Caco-2 (cell line): ENCODE measurements at regions of chr2 and their contacts with region 1.

Region 1: GRCh38 chr2:75002007-75002406 is 43.6 kb downstream of the POLE4 start:
- DNase-seq: peak; percentile 70 to 74
- H3K4me3 ChIP-seq: no peak overlapping the region
- H3K4me3 Mint-ChIP-seq: no peak overlapping the region
- H3K27ac Mint-ChIP-seq: no peak overlapping the region
- H3K4me1 ChIP-seq: peaks cover 22% of the 10 kb centered on the region
- H3K4me1 Mint-ChIP-seq: no peaks in the 10 kb centered on the region
- H3K27me3 ChIP-seq: no peaks in the 10 kb centered on the region
- H3K27me3 Mint-ChIP-seq: no peaks in the 10 kb centered on the region
- CTCF ChIP-seq: no peak

Region 2: GRCh38 chr2:74816540-74817303 is 185.3 kb before region 1 on chr2:
- CTCF ChIA-PET with region 1: no interaction called
- POLR2A ChIA-PET with region 1: no interaction called
- intact Hi-C with region 1: no loop called
- DNase-seq: peak; percentile 57
- H3K4me3 ChIP-seq: no peak overlapping the region; the same call in 1 of the 2 replicates
- H3K4me3 Mint-ChIP-seq: peak overlapping the region; percentile 52
- H3K27ac Mint-ChIP-seq: peak overlapping the region; percentile 37
- H3K4me1 ChIP-seq: peaks cover 55% of the 10 kb centered on the region
- H3K4me1 Mint-ChIP-seq: peaks cover 40% of the 10 kb centered on the region
- H3K27me3 ChIP-seq: no peaks in the 10 kb centered on the region
- H3K27me3 Mint-ChIP-seq: no peaks in the 10 kb centered on the region
- CTCF ChIP-seq: no peak

Region 3: DNA sequence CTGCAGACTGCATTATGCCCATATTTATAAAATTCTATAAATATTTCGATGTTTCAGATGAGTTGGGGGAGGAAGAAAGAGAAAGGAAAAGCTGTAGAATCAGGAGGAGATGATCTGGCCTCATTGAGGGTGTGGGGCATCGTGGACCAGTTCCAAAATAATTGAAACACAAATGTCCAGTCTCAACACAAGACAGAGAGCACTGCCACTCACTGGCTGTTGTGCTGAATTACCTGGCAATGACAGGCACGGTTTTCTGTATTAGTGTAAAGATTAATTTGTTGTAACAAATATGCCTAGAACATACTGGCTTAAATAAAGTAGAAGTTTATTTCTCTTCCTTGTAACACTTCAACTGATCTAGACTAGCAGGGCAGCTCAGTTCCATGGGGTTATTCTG is 19.4 kb before region 1 on chr2:
- CTCF ChIA-PET with region 1: no interaction called
- POLR2A ChIA-PET with region 1: no interaction called
- intact Hi-C with region 1: no loop called
- DNase-seq: no peak
- H3K4me3 ChIP-seq: no peak overlapping the region
- H3K4me3 Mint-ChIP-seq: no peak overlapping the region
- H3K27ac Mint-ChIP-seq: no peak overlapping the region
- H3K4me1 ChIP-seq: no peaks in the 10 kb centered on the region
- H3K4me1 Mint-ChIP-seq: no peaks in the 10 kb centered on the region
- H3K27me3 ChIP-seq: no peaks in the 10 kb centered on the region
- H3K27me3 Mint-ChIP-seq: no peaks in the 10 kb centered on the region
- CTCF ChIP-seq: peak in 1 of 2 experiments; percentile 39

Region 4: GRCh38 chr2:75021657-75022056 is 19.6 kb after region 1 on chr2:
- CTCF ChIA-PET with region 1: no interaction called
- POLR2A ChIA-PET with region 1: no interaction called
- intact Hi-C with region 1: loop called (anchors 2 kb)
- DNase-seq: peak; percentile 59 to 67
- H3K4me3 ChIP-seq: no peak overlapping the region
- H3K4me3 Mint-ChIP-seq: peak overlapping the region; percentile 49
- H3K27ac Mint-ChIP-seq: peak overlapping the region; percentile 60
- H3K4me1 ChIP-seq: peaks cover 23% of the 10 kb centered on the region
- H3K4me1 Mint-ChIP-seq: peaks cover 30% of the 10 kb centered on the region
- H3K27me3 ChIP-seq: no peaks in the 10 kb centered on the region
- H3K27me3 Mint-ChIP-seq: no peaks in the 10 kb centered on the region
- CTCF ChIP-seq: no peak